Activated naive CD4-positive, alpha-beta T cell treated with anti-CD3 and anti-CD28 coated beads for 36 hours (primary cell): ENCODE measurements at regions of chr6 and their contacts with region 1.

Region 1: GRCh38 chr6:30883685-30884520 is at the start of gene DDR1:
- DNase-seq: peak; percentile 47
- H3K4me3 Mint-ChIP-seq: peak within 1 kb of the TSS; percentile 80
- H3K27ac Mint-ChIP-seq: peak within 1 kb of the TSS; percentile 48
- H3K4me1 Mint-ChIP-seq: peaks cover 32% of the 10 kb centered on the region
- H3K27me3 Mint-ChIP-seq: no peaks in the 10 kb centered on the region
- total RNA-seq, gene DDR1: 9.5 to 10.1 TPM

Region 2: DNA sequence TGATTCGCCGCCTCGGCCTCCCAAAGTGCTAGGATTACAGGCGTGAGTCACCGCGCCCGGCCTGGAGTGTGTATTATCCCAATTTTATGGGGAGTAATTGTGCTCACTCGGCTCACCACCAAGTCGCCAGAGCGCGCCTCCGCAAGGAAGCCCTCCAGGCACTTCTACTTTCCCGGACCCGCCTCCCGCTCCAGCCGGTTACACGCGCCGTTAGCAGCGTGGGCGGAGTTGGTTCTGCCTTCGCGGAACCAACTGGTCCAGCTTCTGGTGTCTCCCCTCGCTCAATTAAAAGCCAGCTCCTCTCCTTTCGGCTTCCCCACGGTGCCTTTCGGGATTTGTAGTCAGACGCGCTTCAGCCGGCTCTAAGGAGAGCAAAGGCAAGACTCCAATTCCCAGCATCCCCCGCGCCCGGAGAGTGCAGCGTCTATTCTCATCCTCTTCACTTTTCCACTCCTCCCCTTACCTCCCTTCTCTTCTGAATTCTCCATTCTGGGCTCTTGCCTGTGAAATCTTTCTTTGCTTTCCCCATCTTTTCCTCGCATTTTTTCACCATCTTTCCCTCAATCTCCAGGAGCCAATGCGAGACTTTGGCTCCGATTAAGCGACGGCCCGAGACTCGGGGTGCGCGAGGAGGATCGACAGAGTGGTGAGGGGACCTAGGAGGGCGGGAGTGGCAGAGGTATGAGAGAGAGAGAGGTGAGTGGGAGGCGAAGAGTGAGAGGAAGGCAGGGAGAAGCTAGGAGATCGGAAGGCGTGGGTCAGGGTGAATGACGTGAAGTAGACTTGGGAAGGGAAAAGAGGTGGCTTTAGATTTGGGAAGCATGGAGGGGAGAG is 24.1 kb after region 1 on chr6 and contains the start of gene GTF2H4:
- CTCF ChIA-PET with region 1: interaction called, 4 read pairs
- intact Hi-C with region 1: loop called (anchors 2 kb)
- DNase-seq: peak; percentile 98
- H3K4me3 Mint-ChIP-seq: peak within 1 kb of the TSS; percentile 99
- H3K27ac Mint-ChIP-seq: peak within 1 kb of the TSS; percentile 78
- H3K4me1 Mint-ChIP-seq: peaks cover 17% of the 10 kb centered on the region
- H3K27me3 Mint-ChIP-seq: no peaks in the 10 kb centered on the region
- total RNA-seq, gene GTF2H4: 33.3 to 42.4 TPM